Natural killer cell (primary cell): ENCODE measurements at regions of chr20 and their contacts with region 1.

Region 1: GRCh38 chr20:18507218-18508021 is at the start of gene SEC23B:
- DNase-seq: peak; percentile 99
- ATAC-seq: peak; percentile 84 to 94 (median 86)
- H3K4me3 ChIP-seq: peak within 1 kb of the TSS; percentile 77
- H3K4me3 Mint-ChIP-seq: peak within 1 kb of the TSS; percentile 100
- H3K27ac ChIP-seq: peak within 1 kb of the TSS; percentile 99
- H3K27ac Mint-ChIP-seq: peak within 1 kb of the TSS; percentile 100
- H3K4me1 ChIP-seq: peaks cover 18% of the 10 kb centered on the region
- H3K4me1 Mint-ChIP-seq: peaks cover 38 to 44% of the 10 kb centered on the region in 2 donors
- H3K27me3 ChIP-seq: peaks cover 3% of the 10 kb centered on the region
- H3K27me3 Mint-ChIP-seq: peaks cover 7 to 12% of the 10 kb centered on the region in 2 donors
- CTCF ChIP-seq: no peak
- total RNA-seq, gene SEC23B: 58.2 to 68.8 (median 63.9) TPM

Region 2: GRCh38 chr20:18137412-18138265 is 369.8 kb before region 1 on chr20 and contains the starts of genes KAT14 and PET117:
- intact Hi-C with region 1: loop called (anchors 10 kb)
- DNase-seq: peak; percentile 94 to 96
- ATAC-seq: peak; percentile 91 to 98 (median 93)
- H3K4me3 ChIP-seq: peak within 1 kb of the TSS; percentile 98
- H3K4me3 Mint-ChIP-seq: peak within 1 kb of the TSS; percentile 88
- H3K27ac ChIP-seq: peak within 1 kb of the TSS; percentile 89
- H3K27ac Mint-ChIP-seq: peak within 1 kb of the TSS; percentile 67 to 91
- H3K4me1 ChIP-seq: peaks cover 15% of the 10 kb centered on the region
- H3K4me1 Mint-ChIP-seq: peaks cover 27 to 37% of the 10 kb centered on the region in 2 donors
- H3K27me3 ChIP-seq: no peaks in the 10 kb centered on the region
- H3K27me3 Mint-ChIP-seq: no peaks in the 10 kb centered on the region
- CTCF ChIP-seq: no peak
- total RNA-seq, gene KAT14: 9.7 to 13.0 (median 10.9) TPM
- total RNA-seq, gene PET117: 7.0 to 11.7 (median 10.4) TPM

Region 3: GRCh38 chr20:18466894-18467730 is 40.3 kb before region 1 on chr20 and contains the starts of genes DZANK1 and POLR3F:
- intact Hi-C with region 1: loop called (anchors 1 kb)
- DNase-seq: peak; percentile 87 to 94
- ATAC-seq: peak; percentile 92 to 95 (median 94)
- H3K4me3 ChIP-seq: peak within 1 kb of the TSS; percentile 70
- H3K4me3 Mint-ChIP-seq: peak within 1 kb of the TSS; percentile 97
- H3K27ac ChIP-seq: peak within 1 kb of the TSS; percentile 84
- H3K27ac Mint-ChIP-seq: peak within 1 kb of the TSS; percentile 95 to 97
- H3K4me1 ChIP-seq: peaks cover 16% of the 10 kb centered on the region
- H3K4me1 Mint-ChIP-seq: peaks cover 21 to 28% of the 10 kb centered on the region in 2 donors
- H3K27me3 ChIP-seq: no peaks in the 10 kb centered on the region
- H3K27me3 Mint-ChIP-seq: no peaks in the 10 kb centered on the region
- CTCF ChIP-seq: no peak
- total RNA-seq, gene DZANK1: 2.7 to 5.7 (median 3.7) TPM
- total RNA-seq, gene POLR3F: 8.5 to 10.6 (median 8.8) TPM

Region 4: GRCh38 chr20:18587665-18588573 is 80.5 kb after region 1 on chr20 and contains the start of gene DTD1:
- intact Hi-C with region 1: loop called (anchors 5 kb)
- DNase-seq: peak; percentile 85 to 86
- ATAC-seq: peak; percentile 87 to 95 (median 88)
- H3K4me3 ChIP-seq: peak within 1 kb of the TSS; percentile 71
- H3K4me3 Mint-ChIP-seq: peak within 1 kb of the TSS; percentile 90
- H3K27ac ChIP-seq: peak within 1 kb of the TSS; percentile 54
- H3K27ac Mint-ChIP-seq: peak within 1 kb of the TSS; percentile 84 to 87
- H3K4me1 ChIP-seq: peaks cover 14% of the 10 kb centered on the region
- H3K4me1 Mint-ChIP-seq: peaks cover 25 to 26% of the 10 kb centered on the region in 2 donors
- H3K27me3 ChIP-seq: no peaks in the 10 kb centered on the region
- H3K27me3 Mint-ChIP-seq: peaks cover 0 to 6% of the 10 kb centered on the region in 2 donors
- CTCF ChIP-seq: peak; percentile 65
- total RNA-seq, gene DTD1: 23.4 to 28.4 (median 24.1) TPM

Region 5: DNA sequence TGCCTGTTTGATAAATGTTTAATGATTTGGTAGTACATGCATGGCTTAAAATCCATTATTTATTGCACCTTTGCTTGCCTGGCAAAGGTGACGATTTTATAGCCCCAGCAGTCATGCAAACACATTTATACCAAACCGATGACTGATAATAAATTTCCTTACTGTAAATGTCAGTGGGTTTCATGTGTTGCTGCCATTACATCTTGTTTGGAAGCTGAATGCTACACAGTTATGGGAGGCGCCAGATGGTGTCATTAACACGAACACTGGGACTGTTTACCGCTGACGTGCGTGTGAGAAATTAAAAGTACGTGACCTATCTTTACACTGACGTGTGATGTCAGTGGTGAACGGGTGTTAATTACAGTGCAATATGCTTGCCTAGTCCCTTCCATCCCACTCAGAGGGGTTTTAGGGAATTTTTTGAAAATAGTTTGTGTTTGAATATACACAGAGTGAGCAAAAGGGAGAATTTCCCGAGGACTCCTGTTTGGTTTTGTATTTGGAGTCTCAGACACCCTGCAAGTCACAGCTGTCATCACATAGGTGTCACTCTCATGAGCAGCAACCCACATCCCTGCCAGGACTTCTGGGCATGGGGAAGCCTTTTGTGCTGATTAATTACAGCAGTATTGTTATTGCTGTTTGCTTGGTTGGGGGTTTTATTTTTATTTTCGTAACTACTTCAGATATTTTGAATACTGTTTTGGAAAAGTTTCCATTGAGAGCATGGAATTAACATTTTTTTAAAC is 1708.7 kb after region 1 on chr20:
- intact Hi-C with region 1: loop called (anchors 5 kb)
- DNase-seq: peak; percentile 66 to 68
- ATAC-seq: peak; percentile 84 to 94 (median 89)
- H3K4me3 ChIP-seq: no peak overlapping the region
- H3K4me3 Mint-ChIP-seq: peak overlapping the region; percentile 76
- H3K27ac ChIP-seq: peak overlapping the region; percentile 75
- H3K27ac Mint-ChIP-seq: peak overlapping the region; percentile 91 to 96
- H3K4me1 ChIP-seq: no peaks in the 10 kb centered on the region
- H3K4me1 Mint-ChIP-seq: peaks cover 47 to 50% of the 10 kb centered on the region in 2 donors
- H3K27me3 ChIP-seq: no peaks in the 10 kb centered on the region
- H3K27me3 Mint-ChIP-seq: no peaks in the 10 kb centered on the region
- CTCF ChIP-seq: no peak